ENCODE measurements at regions of chr19 and their contacts with region 1.

Region 1: DNA sequence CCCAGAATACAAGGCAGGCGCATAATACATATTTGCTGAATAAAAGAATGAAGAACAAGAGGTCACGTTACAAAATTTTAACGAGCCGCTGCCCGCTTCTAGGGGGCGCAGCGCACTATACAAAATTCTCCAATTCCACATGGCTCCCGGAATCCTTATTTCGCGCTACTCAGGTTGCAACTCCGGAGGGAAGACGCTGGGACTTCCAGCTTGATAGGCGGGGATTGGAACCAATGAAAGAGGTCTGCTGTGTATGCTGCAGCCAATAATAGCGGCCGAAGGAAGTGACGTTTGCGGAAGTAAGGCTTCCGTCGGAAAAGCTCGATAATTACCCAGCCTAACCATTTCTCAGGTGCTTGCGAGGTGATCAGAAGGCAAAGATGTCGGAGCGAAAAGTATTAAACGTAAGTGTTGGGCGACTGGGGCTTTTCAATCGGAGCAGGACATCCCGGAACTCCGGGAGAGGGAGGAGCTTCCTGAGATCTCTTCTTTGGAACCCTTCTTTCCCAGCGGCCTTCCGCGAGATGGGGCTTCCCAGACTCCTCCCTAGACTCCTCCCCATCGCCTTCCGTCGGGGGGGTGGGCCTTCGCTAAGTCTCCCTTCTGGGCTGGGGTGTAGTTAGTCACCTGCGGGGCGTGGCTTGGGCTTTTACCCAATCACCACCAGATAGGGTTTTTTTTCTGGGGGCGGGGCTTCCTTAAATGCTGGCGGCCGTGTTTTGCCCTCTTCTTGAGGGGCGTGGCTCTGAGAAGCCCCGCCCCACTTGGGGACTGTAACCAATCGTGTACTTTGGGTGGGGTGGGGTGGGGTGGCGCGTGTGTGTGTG is at the start of gene YJU2:
- DNase-seq: peak; percentile 91 to 100 (median 98)
- ATAC-seq: peak; percentile 95
- H3K4me3 ChIP-seq: peak within 1 kb of the TSS; percentile 82 to 87
- H3K4me3 Mint-ChIP-seq: peak within 1 kb of the TSS; percentile 93
- H3K27ac ChIP-seq: peak within 1 kb of the TSS; percentile 96 to 100
- H3K27ac Mint-ChIP-seq: peak within 1 kb of the TSS; percentile 99
- H3K4me1 ChIP-seq: peaks cover 19% of the 10 kb centered on the region
- H3K4me1 Mint-ChIP-seq: peaks cover 22% of the 10 kb centered on the region
- H3K27me3 ChIP-seq: no peaks in the 10 kb centered on the region
- H3K27me3 Mint-ChIP-seq: peaks cover 2% of the 10 kb centered on the region
- CTCF ChIP-seq: peak; percentile 68
- total RNA-seq, gene YJU2: 53.9 to 61.6 TPM

Region 2: GRCh38 chr19:4042731-4043082 is 204.3 kb before region 1 on chr19:
- CTCF ChIA-PET with region 1: no interaction called
- POLR2A ChIA-PET with region 1: no interaction called
- intact Hi-C with region 1: no loop called
- DNase-seq: no peak
- ATAC-seq: no peak
- H3K4me3 ChIP-seq: no peak overlapping the region
- H3K4me3 Mint-ChIP-seq: no peak overlapping the region
- H3K27ac ChIP-seq: no peak overlapping the region
- H3K27ac Mint-ChIP-seq: no peak overlapping the region
- H3K4me1 ChIP-seq: peaks cover 16% of the 10 kb centered on the region
- H3K4me1 Mint-ChIP-seq: peaks cover 16% of the 10 kb centered on the region
- H3K27me3 ChIP-seq: no peaks in the 10 kb centered on the region
- H3K27me3 Mint-ChIP-seq: no peaks in the 10 kb centered on the region
- CTCF ChIP-seq: no peak

Region 3: GRCh38 chr19:4065430-4066175 is 181.4 kb before region 1 on chr19:
- CTCF ChIA-PET with region 1: no interaction called
- POLR2A ChIA-PET with region 1: no interaction called
- intact Hi-C with region 1: loop called in 1 of 2 experiments (anchors 2 kb)
- DNase-seq: peak; percentile 94 to 99 (median 97)
- ATAC-seq: peak; percentile 72
- H3K4me3 ChIP-seq: peak overlapping the region; percentile 86 to 89
- H3K4me3 Mint-ChIP-seq: peak overlapping the region; percentile 73
- H3K27ac ChIP-seq: no peak overlapping the region
- H3K27ac Mint-ChIP-seq: no peak overlapping the region
- H3K4me1 ChIP-seq: peaks cover 58% of the 10 kb centered on the region
- H3K4me1 Mint-ChIP-seq: peaks cover 40% of the 10 kb centered on the region
- H3K27me3 ChIP-seq: no peaks in the 10 kb centered on the region
- H3K27me3 Mint-ChIP-seq: no peaks in the 10 kb centered on the region
- CTCF ChIP-seq: no peak

Region 4: DNA sequence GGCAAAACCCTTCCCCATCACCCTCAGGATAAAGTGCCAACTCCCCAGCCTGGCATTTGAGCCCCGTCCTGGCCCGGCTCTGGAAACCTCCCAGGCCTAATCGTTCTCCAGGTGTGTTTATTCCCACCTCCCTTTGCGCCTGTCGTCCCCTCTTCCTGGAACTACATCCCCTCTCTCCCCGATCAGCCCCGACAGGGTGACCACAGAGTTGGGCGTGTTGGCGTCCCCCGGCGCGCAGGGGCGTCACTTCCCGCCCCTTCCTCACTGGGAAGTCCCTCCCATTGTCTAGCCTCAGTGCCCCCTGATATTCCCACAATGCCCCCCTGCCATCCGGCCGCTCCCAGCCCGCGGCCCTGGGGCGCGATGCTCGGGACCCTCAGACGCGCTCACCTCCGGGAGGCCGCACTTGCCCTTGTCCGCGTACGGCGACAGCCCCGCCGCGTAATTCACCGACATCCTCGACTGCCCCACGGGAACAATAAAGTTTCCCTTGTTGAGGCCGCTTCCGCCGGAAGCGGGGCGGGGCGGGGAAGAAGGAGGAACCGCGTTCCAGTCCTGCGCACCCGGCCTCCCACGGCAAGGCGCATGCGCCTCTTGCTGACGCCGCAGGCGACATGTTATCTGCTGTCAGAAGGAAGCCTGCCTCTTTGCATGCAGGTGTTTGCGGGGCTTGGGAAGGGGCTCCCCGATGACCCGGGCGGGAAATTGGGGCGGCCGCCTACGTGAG is 64.7 kb before region 1 on chr19 and contains the starts of genes ANKRD24 and SIRT6:
- CTCF ChIA-PET with region 1: no interaction called
- POLR2A ChIA-PET with region 1: no interaction called
- intact Hi-C with region 1: loop called (anchors 1 kb)
- DNase-seq: peak; percentile 91 to 98 (median 97)
- ATAC-seq: peak; percentile 88
- H3K4me3 ChIP-seq: peak within 1 kb of the TSS; percentile 79 to 95
- H3K4me3 Mint-ChIP-seq: peak within 1 kb of the TSS; percentile 98
- H3K27ac ChIP-seq: peak within 1 kb of the TSS; percentile 74 to 76
- H3K27ac Mint-ChIP-seq: peak within 1 kb of the TSS; percentile 93
- H3K4me1 ChIP-seq: peaks cover 28% of the 10 kb centered on the region
- H3K4me1 Mint-ChIP-seq: peaks cover 31% of the 10 kb centered on the region
- H3K27me3 ChIP-seq: no peaks in the 10 kb centered on the region
- H3K27me3 Mint-ChIP-seq: peaks cover 2% of the 10 kb centered on the region
- CTCF ChIP-seq: no peak
- total RNA-seq, gene ANKRD24: 0.83 to 1.2 TPM
- total RNA-seq, gene SIRT6: 12.0 to 13.0 TPM

Region 5: DNA sequence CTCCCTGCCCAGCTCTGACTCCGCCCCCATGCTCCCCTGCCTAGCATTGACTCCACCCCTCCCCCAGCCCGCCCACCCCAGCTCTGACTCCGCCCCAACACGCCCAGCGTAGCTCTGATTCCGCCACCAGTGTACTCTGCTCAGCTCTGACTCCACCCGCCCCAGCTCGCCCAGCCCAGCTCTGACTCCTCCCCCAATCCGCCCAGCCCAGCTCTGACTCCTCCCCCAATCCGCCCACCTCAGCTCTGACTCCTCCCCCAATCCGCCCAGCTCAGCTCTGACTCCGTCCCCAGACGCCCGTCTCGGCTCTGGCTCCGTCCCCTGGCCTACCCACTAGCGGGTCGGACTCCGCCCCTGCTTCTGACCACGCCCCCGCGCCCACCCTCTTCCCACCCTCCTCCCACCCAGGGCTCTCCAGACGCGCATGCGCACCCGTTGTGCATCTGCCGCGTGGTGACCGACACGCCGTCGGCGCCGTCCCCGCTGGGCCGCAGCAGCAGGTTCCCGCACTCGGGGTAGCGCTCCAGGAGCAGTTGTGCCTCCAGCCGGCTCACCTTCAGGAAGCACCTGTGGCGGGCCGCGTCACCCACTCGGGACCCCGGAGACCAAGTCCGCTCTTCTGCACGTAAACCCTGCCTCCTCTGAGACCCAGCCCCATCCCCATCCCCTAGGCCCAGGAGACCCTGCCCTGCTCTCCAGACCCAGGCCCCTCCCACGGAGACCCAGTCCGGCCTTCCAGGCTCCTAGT is 81.4 kb after region 1 on chr19:
- CTCF ChIA-PET with region 1: no interaction called
- POLR2A ChIA-PET with region 1: interaction called, 3 read pairs
- intact Hi-C with region 1: loop called (anchors 1 kb)
- DNase-seq: peak; percentile 84 to 99 (median 97)
- ATAC-seq: peak; percentile 95
- H3K4me3 ChIP-seq: peak overlapping the region; percentile 53 to 81
- H3K4me3 Mint-ChIP-seq: peak overlapping the region; percentile 80
- H3K27ac ChIP-seq: peak overlapping the region in 1 of 2 experiments; percentile 55
- H3K27ac Mint-ChIP-seq: peak overlapping the region; percentile 92
- H3K4me1 ChIP-seq: peaks cover 20% of the 10 kb centered on the region
- H3K4me1 Mint-ChIP-seq: peaks cover 27% of the 10 kb centered on the region
- H3K27me3 ChIP-seq: no peaks in the 10 kb centered on the region
- H3K27me3 Mint-ChIP-seq: no peaks in the 10 kb centered on the region
- CTCF ChIP-seq: no peak

Region 6: GRCh38 chr19:4369888-4370260 is 122.9 kb after region 1 on chr19:
- CTCF ChIA-PET with region 1: no interaction called
- POLR2A ChIA-PET with region 1: no interaction called
- intact Hi-C with region 1: loop called in 1 of 2 experiments (anchors 1 kb)
- DNase-seq: peak; percentile 56 to 86 (median 75)
- ATAC-seq: peak; percentile 70
- H3K4me3 ChIP-seq: peak overlapping the region; percentile 58 to 65
- H3K4me3 Mint-ChIP-seq: peak overlapping the region; percentile 91
- H3K27ac ChIP-seq: peak overlapping the region; percentile 67 to 87
- H3K27ac Mint-ChIP-seq: peak overlapping the region; percentile 96
- H3K4me1 ChIP-seq: peaks cover 35% of the 10 kb centered on the region
- H3K4me1 Mint-ChIP-seq: peaks cover 32% of the 10 kb centered on the region
- H3K27me3 ChIP-seq: no peaks in the 10 kb centered on the region
- H3K27me3 Mint-ChIP-seq: no peaks in the 10 kb centered on the region
- CTCF ChIP-seq: peak; percentile 57

Region 7: DNA sequence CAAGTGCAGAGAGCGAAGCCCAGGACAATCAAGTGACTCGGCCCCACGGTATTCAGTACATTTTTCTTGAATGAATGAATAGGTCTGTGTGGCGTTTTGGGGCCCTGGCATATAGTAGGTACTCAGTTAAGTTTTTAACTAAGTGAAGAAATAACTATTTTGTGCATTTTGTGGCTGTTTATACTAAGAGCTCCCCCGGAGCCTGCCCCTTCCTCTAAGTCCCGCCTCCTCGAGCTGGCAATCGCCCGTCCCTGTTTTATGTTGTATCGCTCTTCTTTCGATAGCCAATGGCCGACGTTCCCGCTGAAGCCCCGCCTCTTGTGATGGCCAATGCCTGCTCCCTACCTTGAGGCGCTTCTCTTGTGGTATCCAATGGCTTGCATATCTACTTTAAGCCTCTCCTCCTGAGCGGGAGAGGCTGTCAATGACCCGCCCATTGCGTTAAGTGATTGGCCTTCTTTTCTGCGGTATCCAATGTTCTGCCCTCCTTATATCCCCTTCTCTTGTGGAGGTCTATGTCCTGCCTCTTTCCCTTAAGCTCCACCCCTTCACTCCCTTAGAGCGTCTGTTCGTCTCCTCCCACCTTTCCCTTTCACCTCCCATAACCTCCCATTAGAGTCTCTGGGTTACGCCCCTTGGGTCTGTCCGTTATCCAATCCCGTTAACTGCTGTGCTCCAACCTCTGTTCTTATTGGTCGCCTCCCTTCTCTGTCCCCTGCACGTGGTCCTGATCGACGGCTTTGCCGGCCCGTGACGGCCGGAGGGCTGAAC is 224.6 kb after region 1 on chr19:
- CTCF ChIA-PET with region 1: no interaction called
- POLR2A ChIA-PET with region 1: interaction called, 5 read pairs
- intact Hi-C with region 1: loop called (anchors 1 to 2 kb)
- DNase-seq: peak; percentile 94 to 100 (median 97)
- ATAC-seq: peak; percentile 85
- H3K4me3 ChIP-seq: peak overlapping the region; percentile 55 to 63
- H3K4me3 Mint-ChIP-seq: no peak overlapping the region
- H3K27ac ChIP-seq: peak overlapping the region; percentile 70 to 72
- H3K27ac Mint-ChIP-seq: no peak overlapping the region
- H3K4me1 ChIP-seq: peaks cover 20% of the 10 kb centered on the region
- H3K4me1 Mint-ChIP-seq: peaks cover 22% of the 10 kb centered on the region
- H3K27me3 ChIP-seq: no peaks in the 10 kb centered on the region
- H3K27me3 Mint-ChIP-seq: no peaks in the 10 kb centered on the region
- CTCF ChIP-seq: no peak

Region 8: DNA sequence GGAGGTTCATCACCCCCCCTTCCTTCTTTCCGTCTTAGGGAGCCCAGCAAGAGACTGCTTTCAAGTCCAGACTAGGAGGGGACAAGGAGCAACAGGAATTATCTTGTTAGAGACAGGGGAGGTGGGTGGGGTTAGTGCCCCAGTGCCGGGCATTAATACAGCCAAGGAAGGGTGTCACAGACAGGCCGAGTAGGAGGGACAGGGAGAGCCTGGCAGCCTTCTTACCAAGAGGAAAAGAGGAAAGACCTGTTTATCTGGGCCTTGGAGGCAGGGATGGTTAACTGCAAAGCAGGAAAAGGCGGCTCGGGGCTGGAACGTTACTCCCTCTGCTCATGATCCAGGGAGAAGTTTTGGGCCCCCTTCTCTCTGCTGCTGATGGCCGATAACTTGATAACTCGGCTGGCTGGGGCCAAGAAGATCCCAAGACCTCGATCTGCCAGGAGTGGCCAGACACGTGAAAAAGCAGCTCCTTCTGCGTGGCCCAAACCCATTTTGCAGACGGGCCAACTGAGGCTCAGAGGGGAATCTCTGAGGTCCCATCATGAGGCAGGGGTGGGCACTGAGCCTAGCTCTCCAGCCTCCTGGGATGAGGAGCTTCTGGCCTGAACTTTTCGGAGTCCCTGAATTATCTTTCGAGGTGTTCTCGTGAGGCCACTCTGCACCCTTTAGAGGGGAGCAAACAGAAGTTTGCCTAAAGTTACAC is 1014.4 kb after region 1 on chr19:
- CTCF ChIA-PET with region 1: no interaction called
- POLR2A ChIA-PET with region 1: no interaction called
- intact Hi-C with region 1: no loop called
- DNase-seq: no peak
- ATAC-seq: no peak
- H3K4me3 ChIP-seq: no peak overlapping the region
- H3K4me3 Mint-ChIP-seq: no peak overlapping the region
- H3K27ac ChIP-seq: no peak overlapping the region
- H3K27ac Mint-ChIP-seq: no peak overlapping the region
- H3K4me1 ChIP-seq: no peaks in the 10 kb centered on the region
- H3K4me1 Mint-ChIP-seq: no peaks in the 10 kb centered on the region
- H3K27me3 ChIP-seq: no peaks in the 10 kb centered on the region
- H3K27me3 Mint-ChIP-seq: no peaks in the 10 kb centered on the region
- CTCF ChIP-seq: no peak